ENCODE measurements at regions of chr15 and their contacts with region 1.

Region 1: DNA sequence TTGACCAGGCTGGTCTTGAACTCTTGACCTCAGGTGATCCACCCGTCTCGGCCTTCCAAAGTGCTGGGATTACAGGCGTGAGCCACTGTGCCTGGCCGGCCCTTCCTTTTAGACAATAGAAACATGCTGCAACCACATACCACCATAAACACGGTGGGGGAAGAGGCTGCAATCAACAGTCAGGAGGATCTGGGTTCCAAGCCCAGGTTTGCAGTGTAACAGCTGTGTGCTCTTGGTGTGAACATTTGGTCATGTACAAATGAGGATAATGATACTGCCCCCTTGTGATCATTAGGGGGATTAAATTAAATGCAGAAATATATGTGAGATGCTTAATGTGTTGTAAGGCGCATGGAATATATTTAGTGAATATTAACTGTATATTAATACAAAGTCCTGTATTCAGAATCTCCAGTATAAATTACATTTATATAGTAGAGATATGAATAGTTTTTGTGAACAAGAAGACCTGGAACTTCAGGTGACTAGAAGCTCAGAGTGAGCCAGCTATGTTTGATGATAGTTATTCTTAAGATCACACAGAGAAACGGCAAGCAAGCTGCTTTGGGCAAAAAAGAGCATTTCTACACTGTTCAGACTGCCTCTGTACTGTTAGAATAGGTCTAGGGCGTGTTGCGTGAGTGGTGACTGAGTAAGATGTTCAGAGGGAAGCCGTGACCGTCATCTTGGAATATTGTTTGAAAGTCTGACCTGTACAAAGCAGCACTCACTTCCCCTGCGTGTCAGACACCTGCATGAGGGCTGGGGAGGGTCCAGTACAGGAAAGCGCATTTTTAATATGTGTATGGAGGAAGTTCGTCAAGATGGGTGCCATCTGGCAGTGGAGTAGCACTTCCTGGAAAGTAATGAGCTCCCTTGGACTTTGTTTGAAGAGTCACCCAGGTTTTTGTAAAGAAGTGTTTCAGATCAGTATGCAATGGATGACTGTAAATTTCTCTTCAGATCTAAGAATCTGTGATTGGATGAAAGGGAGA is 125.8 kb downstream of the PGPEP1L start:
- DNase-seq: peak; percentile 16
- ATAC-seq: peak; percentile 72
- H3K4me3 Mint-ChIP-seq: no peak overlapping the region
- H3K27ac Mint-ChIP-seq: no peak overlapping the region
- H3K4me1 Mint-ChIP-seq: peaks cover 9% of the 10 kb centered on the region
- H3K27me3 Mint-ChIP-seq: no peaks in the 10 kb centered on the region

Region 2: DNA sequence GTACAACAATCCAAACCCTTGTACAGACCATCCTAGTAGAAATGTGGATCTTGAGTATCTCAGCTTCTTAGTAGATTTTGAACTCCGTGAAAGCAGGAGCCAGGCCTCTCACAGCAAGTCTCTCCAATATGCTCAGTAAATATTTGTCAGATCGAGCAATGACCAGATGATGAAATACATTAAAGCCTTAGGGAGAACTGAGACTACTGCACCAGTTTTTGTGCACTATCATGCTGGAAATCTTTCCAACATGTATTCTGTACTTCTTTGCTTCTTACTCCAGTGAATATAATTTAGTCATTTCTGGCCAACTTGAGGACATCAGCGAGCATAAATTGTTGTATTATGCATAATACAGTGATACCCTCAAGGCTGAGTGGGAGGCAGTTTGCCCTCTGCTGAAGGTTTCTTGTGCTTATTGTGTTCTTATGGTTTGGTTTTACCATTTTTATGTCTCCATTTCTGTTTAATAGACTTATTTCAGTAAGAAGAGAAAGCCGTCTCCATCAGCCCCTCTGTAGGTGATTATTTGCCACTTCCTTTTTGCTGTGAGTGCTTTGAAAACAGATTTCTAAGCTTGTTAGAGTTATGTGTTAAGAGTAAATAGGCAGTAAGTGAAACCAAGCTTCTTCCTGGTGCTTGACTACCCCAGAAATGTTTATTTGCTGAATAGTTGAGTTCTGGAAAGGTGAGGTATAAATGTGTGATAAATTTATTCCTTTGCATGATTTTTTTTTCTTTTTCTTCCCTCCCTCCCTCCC is 21.4 kb before region 1 on chr15:
- CTCF ChIA-PET with region 1: interaction called, 25 read pairs
- POLR2A ChIA-PET with region 1: interaction called, 3 read pairs
- intact Hi-C with region 1: no loop called
- DNase-seq: no peak
- ATAC-seq: no peak
- H3K4me3 Mint-ChIP-seq: no peak overlapping the region
- H3K27ac Mint-ChIP-seq: peak overlapping the region; percentile 51
- H3K4me1 Mint-ChIP-seq: peaks cover 54% of the 10 kb centered on the region
- H3K27me3 Mint-ChIP-seq: no peaks in the 10 kb centered on the region

Region 3: DNA sequence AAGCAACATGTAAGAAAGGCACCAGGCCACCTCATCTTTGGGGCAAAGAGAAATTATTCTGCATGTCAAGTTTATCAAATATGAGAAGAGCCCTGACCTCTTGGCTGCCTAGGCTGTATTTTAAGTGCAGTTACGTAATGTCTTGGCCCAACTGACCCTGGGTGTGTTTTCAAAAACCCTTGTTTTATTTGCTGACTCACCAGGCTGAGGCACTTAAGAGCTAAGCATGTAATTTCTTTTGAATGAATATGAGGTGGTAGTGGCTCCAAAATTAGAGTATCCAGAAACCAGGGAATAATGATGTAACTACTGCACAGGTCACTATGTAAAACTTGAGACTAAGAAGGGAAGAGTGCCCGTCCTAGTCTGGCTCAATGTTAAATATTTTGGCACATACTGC is 101.5 kb after region 1 on chr15:
- CTCF ChIA-PET with region 1: no interaction called
- POLR2A ChIA-PET with region 1: no interaction called
- intact Hi-C with region 1: no loop called
- DNase-seq: no peak
- ATAC-seq: no peak
- H3K4me3 Mint-ChIP-seq: no peak overlapping the region
- H3K27ac Mint-ChIP-seq: no peak overlapping the region
- H3K4me1 Mint-ChIP-seq: no peaks in the 10 kb centered on the region
- H3K27me3 Mint-ChIP-seq: peaks cover 3% of the 10 kb centered on the region

Measured in activated CD4-positive, alpha-beta T cell treated with anti-CD3 and anti-CD28 coated beads for 36 hours (primary cell).